Activated CD4-positive, alpha-beta T cell treated with anti-CD3 and anti-CD28 coated beads for 36 hours (primary cell): ENCODE measurements at regions of chr11 and their contacts with region 1.

Region 1: GRCh38 chr11:95282291-95282751 is 51.3 kb upstream of the SESN3 start:
- DNase-seq: no peak
- ATAC-seq: no peak
- H3K4me3 Mint-ChIP-seq: no peak overlapping the region
- H3K27ac Mint-ChIP-seq: no peak overlapping the region
- H3K4me1 Mint-ChIP-seq: peaks cover 6% of the 10 kb centered on the region
- H3K27me3 Mint-ChIP-seq: no peaks in the 10 kb centered on the region

Region 2: GRCh38 chr11:95264881-95265280 is 17.4 kb before region 1 on chr11:
- CTCF ChIA-PET with region 1: interaction called, 3 read pairs
- POLR2A ChIA-PET with region 1: no interaction called
- intact Hi-C with region 1: loop called in 1 of 2 experiments (anchors 2 kb)
- DNase-seq: no peak
- ATAC-seq: no peak
- H3K4me3 Mint-ChIP-seq: no peak overlapping the region
- H3K27ac Mint-ChIP-seq: no peak overlapping the region
- H3K4me1 Mint-ChIP-seq: peaks cover 7% of the 10 kb centered on the region
- H3K27me3 Mint-ChIP-seq: no peaks in the 10 kb centered on the region